Activated T-helper 1 cell treated with anti-CD3 and anti-CD28 coated beads, Interleukin-12 subunit alpha, Interleukin-12 subunit beta, Interleukin-2, Interleukin-4 antibody, amounts not matched to agents 30 ng/mL and 10 ng/mL and 1 ng/mL, durations not matched to agents 14 hours and 24 hours and 36 hours (primary cell): ENCODE measurements at regions of chr6 and their contacts with region 1.

Region 1: GRCh38 chr6:96897383-96898240 is at the start of gene NDUFAF4:
- DNase-seq: peak; percentile 94
- H3K4me3 Mint-ChIP-seq: peak within 1 kb of the TSS; percentile 98
- H3K27ac Mint-ChIP-seq: peak within 1 kb of the TSS; percentile 98
- H3K4me1 Mint-ChIP-seq: peaks cover 21% of the 10 kb centered on the region
- H3K27me3 Mint-ChIP-seq: peaks cover 2% of the 10 kb centered on the region
- total RNA-seq, gene NDUFAF4: 73.4 and 74.1 TPM in 2 replicates

Region 2: DNA sequence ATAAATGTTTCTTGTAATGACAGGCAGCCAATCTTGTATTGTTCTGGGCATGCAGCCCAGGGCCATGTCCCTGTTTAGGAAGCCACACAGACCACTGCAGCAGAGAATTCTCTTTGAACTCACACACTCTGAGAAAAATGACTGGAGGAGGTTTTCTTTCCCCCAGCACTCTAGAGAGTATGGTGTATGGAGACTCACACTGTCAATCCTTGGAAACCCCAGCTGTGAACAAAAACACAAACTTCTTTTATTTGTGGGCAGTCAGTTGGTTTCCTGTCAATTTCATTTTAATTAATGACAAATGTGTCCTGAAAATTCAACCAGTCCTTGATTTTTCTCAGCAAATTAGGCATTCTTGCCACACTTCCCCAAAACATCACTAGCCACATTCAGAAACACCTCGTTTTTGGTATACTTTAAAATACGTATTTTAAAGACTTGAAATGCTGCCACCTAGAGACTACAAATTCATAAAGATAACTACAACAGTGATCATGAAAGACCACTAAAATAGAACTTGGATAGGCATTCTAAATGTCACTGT is 428.9 kb before region 1 on chr6:
- intact Hi-C with region 1: loop called (anchors 5 kb)
- DNase-seq: no peak
- H3K4me3 Mint-ChIP-seq: no peak overlapping the region
- H3K27ac Mint-ChIP-seq: no peak overlapping the region
- H3K4me1 Mint-ChIP-seq: peaks cover 33% of the 10 kb centered on the region
- H3K27me3 Mint-ChIP-seq: peaks cover 19% of the 10 kb centered on the region

Region 3: GRCh38 chr6:96542702-96543101 is 354.9 kb before region 1 on chr6:
- intact Hi-C with region 1: loop called (anchors 5 kb)
- DNase-seq: no peak
- H3K4me3 Mint-ChIP-seq: no peak overlapping the region
- H3K27ac Mint-ChIP-seq: no peak overlapping the region
- H3K4me1 Mint-ChIP-seq: no peaks in the 10 kb centered on the region
- H3K27me3 Mint-ChIP-seq: no peaks in the 10 kb centered on the region

Region 4: GRCh38 chr6:96837081-96837971 is 60.3 kb before region 1 on chr6 and contains the start of gene GPR63:
- intact Hi-C with region 1: loop called (anchors 1 kb)
- DNase-seq: peak; percentile 83
- H3K4me3 Mint-ChIP-seq: peak within 1 kb of the TSS; percentile 93
- H3K27ac Mint-ChIP-seq: peak within 1 kb of the TSS; percentile 73
- H3K4me1 Mint-ChIP-seq: peaks cover 41% of the 10 kb centered on the region
- H3K27me3 Mint-ChIP-seq: peaks cover 43% of the 10 kb centered on the region
- total RNA-seq, gene GPR63: 3.1 and 3.2 TPM in 2 replicates

Region 5: GRCh38 chr6:97053643-97054411 is 156.2 kb after region 1 on chr6:
- intact Hi-C with region 1: loop called (anchors 1 kb)
- DNase-seq: no peak
- H3K4me3 Mint-ChIP-seq: no peak overlapping the region
- H3K27ac Mint-ChIP-seq: no peak overlapping the region
- H3K4me1 Mint-ChIP-seq: peaks cover 14% of the 10 kb centered on the region
- H3K27me3 Mint-ChIP-seq: peaks cover 4% of the 10 kb centered on the region

Region 6: DNA sequence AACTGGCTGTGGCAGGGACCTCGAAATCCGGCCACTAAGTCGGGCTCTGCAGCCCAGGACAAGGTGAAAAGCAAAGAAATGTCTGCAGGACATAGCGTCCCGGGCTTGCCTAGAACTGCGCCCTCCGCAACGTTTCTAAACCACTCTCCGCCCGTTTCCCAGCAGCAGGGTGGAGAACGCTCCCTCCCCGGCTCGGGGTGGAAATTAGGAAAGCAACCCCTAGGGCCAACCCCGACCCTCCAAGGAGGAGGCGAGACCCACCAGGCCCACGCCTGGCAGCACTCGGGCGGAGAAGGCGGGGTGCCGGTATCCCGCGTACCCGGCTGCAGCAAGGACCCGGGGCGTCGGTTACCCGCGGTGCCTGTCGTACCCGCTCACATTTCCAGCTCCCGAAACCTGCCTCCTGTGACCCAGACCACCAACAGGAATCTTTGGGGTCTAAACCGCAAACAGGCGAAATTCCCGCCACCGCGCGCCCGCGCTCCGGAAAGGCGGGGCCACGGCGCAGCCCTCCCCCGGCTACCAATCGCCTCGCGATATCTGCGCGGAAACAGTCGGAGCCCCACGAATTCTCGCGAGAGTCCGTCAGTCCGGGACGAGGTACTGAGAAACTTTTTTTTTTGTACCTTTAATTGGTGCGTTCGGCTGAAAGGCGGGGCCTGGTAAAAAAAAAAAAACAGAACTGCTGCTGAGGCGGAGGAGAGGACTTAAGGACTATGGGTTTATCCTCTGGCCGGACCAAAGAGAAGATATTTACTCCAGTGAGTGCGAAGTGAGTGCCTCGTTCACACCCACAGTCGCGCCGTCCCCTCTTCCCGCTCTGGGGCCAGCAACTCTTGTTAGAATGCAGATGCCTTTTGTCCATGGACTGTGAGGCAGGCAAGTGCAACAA is 385.4 kb after region 1 on chr6 and contains the start of gene MMS22L:
- intact Hi-C with region 1: loop called (anchors 2 kb)
- DNase-seq: peak; percentile 92
- H3K4me3 Mint-ChIP-seq: peak within 1 kb of the TSS; percentile 93
- H3K27ac Mint-ChIP-seq: peak within 1 kb of the TSS; percentile 80
- H3K4me1 Mint-ChIP-seq: peaks cover 28% of the 10 kb centered on the region
- H3K27me3 Mint-ChIP-seq: peaks cover 13% of the 10 kb centered on the region
- total RNA-seq, gene MMS22L: 49.7 and 57.1 TPM in 2 replicates